Activated CD4-positive, alpha-beta T cell treated with anti-CD3 and anti-CD28 coated beads, Interleukin-2, amount 10 ng/mL, durations not matched to agents 24 days and 14 days (primary cell): ENCODE measurements at regions of chr1 and their contacts with region 1.

Region 1: DNA sequence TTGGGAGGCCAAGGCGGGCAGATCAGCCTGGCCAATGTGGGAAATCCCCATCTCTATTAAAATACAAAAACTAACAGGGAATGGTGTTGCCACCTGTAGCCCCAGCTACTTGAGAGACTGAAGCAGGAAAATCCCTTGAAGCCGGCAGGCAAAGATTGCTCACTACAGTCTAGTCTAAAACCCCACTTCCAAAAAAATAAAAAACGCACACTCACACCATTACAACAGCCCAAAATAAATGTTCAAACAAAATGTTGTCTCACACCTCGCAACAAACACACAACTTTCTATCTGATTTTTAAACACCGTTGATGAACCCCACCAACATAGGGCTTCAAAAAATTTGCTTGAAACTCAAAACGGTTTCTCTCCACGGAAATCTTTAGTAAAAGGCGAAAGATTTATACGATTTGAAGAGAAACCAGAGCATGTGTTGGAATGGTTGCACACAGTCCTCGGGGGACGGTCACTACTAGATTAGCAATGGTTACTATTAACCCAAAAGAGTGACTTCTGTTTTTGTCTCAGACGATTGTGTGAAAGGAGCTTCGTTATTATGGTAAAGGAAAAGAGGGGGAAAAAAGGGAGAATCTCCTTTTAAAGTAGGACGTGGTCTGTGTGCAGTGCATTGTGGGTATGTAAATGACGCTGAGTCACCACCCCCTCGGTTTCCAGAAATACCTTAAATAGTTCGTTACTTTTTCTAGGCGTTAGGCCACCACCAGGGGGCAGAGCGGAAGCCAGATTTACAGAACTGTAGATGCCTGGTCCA is at the start of gene RNU5D-1:
- DNase-seq: peak; percentile 97
- H3K4me3 Mint-ChIP-seq: peak within 1 kb of the TSS; percentile 65
- H3K27ac Mint-ChIP-seq: peak within 1 kb of the TSS; percentile 98
- H3K4me1 Mint-ChIP-seq: peaks cover 32% of the 10 kb centered on the region
- H3K27me3 Mint-ChIP-seq: no peaks in the 10 kb centered on the region
- total RNA-seq, gene RNU5D-1: not detected in 2 replicates

Region 2: GRCh38 chr1:44714944-44715571 is 15.9 kb before region 1 on chr1:
- intact Hi-C with region 1: loop called (anchors 2 kb)
- DNase-seq: peak; percentile 92
- H3K4me3 Mint-ChIP-seq: peak overlapping the region; percentile 59
- H3K27ac Mint-ChIP-seq: peak overlapping the region; percentile 52
- H3K4me1 Mint-ChIP-seq: peaks cover 38% of the 10 kb centered on the region
- H3K27me3 Mint-ChIP-seq: peaks cover 11% of the 10 kb centered on the region

Region 3: DNA sequence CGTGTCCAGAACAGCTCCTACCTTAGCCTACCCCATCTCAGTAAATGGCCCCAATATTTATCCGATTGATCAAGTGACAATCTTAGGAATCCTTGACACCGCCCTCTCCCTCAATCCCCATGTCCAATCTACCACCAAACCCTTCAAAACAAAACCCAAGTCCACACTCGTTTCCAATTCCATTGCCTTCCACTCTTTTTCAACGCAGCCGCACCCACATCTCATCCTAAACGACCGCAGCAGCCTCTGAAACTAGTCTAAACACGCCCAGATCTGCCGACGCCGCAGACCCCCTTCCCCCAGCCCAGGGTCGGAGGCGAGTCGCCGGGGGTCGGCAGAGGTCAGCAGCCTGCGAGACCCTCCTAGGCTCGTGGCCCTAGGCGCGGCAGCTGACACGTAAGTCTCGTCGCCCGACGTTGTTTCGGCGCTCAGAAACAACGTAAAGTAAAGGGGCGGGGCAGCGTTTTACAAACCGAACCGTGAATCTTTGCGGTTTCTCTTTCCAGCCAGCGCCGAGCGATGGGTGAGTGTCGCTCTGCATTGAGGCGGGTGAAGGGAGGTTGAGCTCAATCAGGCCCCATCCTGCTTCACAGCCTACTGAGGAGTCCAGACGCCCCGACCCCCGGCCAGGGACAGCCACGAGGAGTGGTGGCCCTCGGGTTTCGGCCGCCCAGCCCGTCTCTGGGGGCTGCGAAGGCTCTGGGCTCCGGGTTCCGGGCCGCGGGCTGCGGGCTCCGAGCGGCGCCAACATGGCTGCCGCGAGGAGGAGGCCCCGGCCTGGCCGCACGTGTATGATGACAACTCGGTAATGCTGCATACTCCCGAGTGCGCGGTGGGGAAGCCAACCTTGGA is 44.4 kb after region 1 on chr1 and contains the start of gene RPS8:
- intact Hi-C with region 1: loop called (anchors 1 kb)
- DNase-seq: peak; percentile 97
- H3K4me3 Mint-ChIP-seq: peak within 1 kb of the TSS; percentile 89
- H3K27ac Mint-ChIP-seq: peak within 1 kb of the TSS; percentile 94
- H3K4me1 Mint-ChIP-seq: peaks cover 31% of the 10 kb centered on the region
- H3K27me3 Mint-ChIP-seq: no peaks in the 10 kb centered on the region
- total RNA-seq, gene RPS8: 2,376 and 2,377 TPM in 2 replicates

Region 4: GRCh38 chr1:44786138-44786840 is 55.4 kb after region 1 on chr1:
- intact Hi-C with region 1: loop called (anchors 2 kb)
- DNase-seq: peak; percentile 93
- H3K4me3 Mint-ChIP-seq: peak overlapping the region; percentile 83
- H3K27ac Mint-ChIP-seq: peak overlapping the region; percentile 85
- H3K4me1 Mint-ChIP-seq: peaks cover 28% of the 10 kb centered on the region
- H3K27me3 Mint-ChIP-seq: no peaks in the 10 kb centered on the region

Region 5: DNA sequence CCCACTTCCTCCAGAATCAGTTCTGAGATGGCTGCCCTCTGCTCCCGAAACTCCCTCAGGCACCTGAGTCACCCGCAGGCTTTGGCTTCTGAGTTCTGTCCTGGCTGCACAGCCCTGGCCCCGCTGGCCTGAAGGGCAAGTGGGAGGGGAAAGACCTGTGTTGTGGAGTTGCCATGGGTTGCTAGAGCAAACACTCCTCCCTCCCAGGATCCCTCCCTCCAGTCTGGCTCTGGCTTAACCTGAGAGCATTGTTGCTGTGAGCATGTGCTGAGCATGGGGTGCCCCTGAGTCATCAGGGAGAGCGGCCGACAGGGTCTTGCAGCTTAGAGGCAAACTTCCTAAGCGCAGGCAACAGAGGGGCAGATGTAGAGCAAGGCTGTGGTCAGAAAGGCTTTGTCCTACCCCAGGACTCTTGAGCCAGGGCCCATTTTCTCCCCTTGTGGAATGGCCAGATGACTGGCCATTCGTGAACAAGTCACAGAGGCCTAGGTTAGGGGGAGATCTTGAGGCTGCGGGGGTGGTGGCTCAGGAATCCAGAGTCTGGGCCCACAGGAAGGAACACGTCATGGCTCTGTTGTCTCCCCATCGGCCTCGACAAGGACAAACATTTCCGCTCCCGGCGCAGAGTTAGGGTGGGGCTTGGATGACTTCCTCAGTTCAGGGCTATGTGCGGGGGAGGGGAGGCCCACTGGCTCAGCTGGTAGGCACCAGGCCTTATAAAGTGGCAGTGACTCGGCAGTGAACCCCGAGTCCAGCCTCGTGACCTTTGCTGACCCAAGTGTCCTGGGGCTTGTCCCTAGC is 76.5 kb after region 1 on chr1 and contains the start of gene DYNLT4:
- intact Hi-C with region 1: loop called (anchors 1 kb)
- DNase-seq: peak; percentile 96
- H3K4me3 Mint-ChIP-seq: peak within 1 kb of the TSS; percentile 81
- H3K27ac Mint-ChIP-seq: peak within 1 kb of the TSS; percentile 99
- H3K4me1 Mint-ChIP-seq: peaks cover 81% of the 10 kb centered on the region
- H3K27me3 Mint-ChIP-seq: peaks cover 2% of the 10 kb centered on the region
- total RNA-seq, gene DYNLT4: 0.28 TPM in 1 of 2 replicates, not detected in the other

Region 6: DNA sequence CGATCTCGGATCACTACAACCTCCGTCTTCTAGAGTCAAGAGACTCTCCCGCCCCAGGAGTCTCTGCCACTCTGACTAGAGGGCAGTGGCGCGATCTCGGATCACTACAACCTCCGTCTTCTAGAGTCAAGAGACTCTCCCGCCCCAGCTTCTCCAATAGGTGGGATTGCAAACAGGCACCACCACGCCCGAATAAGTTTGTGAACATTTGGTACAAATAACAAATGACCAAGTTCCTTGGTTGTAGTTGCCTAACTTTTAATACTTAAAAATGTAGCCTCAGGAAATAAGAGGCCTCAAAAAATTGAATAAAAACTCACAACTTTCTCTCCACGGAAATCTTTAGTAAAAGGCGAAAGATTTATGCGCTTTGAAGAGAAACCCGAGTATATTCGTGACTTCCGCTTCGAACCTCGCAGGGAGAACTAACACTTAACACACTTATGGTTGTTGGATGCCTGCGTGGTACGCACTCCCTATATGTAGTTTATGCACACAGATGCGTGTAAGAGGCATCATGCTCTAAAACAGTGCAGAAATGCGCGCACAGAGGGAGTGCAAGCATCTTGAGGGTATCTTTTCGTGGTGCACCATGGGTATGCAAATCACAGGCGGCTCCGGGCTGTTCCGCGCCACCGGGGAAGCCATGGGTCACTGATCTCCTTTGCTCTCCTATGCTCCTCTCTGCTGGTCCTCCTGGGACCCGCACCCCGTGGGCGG is 88.8 kb after region 1 on chr1:
- intact Hi-C with region 1: loop called (anchors 1 kb)
- DNase-seq: peak; percentile 94
- H3K4me3 Mint-ChIP-seq: peak overlapping the region; percentile 92
- H3K27ac Mint-ChIP-seq: peak overlapping the region; percentile 99
- H3K4me1 Mint-ChIP-seq: peaks cover 40% of the 10 kb centered on the region
- H3K27me3 Mint-ChIP-seq: no peaks in the 10 kb centered on the region

Region 7: GRCh38 chr1:44929531-44929930 is 198.6 kb after region 1 on chr1:
- intact Hi-C with region 1: no loop called
- DNase-seq: no peak
- H3K4me3 Mint-ChIP-seq: no peak overlapping the region
- H3K27ac Mint-ChIP-seq: no peak overlapping the region
- H3K4me1 Mint-ChIP-seq: peaks cover 5% of the 10 kb centered on the region
- H3K27me3 Mint-ChIP-seq: no peaks in the 10 kb centered on the region